ENCODE measurements at regions of chr20 and their contacts with region 1.

Region 1: DNA sequence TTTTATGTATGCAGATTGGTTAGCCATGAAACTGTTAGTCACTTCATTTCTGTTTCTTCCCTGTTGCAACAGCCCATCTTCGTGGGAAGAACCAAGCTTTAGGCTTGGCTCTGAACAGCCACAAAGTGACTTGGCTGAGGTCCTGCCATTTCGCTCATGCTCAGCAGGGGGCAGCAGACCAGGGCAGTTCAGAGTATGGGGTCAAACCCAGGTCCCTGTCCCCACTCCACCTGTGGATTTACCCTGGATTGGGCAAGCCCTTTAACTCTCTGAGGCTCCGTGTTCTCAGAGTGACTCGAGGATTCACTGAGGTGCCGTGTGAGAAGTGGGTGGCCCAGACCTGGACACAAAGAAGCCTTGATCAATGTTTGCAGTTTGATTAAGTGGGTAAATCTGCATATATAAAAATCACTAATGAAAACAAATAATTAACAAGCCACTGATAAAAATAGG is 19.8 kb upstream of the MAP1LC3A start:
- DNase-seq: peak; percentile 40 to 47
- H3K4me3 ChIP-seq: no peak overlapping the region
- H3K27ac ChIP-seq: no peak overlapping the region
- H3K4me1 ChIP-seq: no peaks in the 10 kb centered on the region
- H3K27me3 ChIP-seq: no peaks in the 10 kb centered on the region
- CTCF ChIP-seq: peak; percentile 26 to 78 (median 60)
- POLR2A ChIP-seq: no peak

Region 2: GRCh38 chr20:34143951-34144350 is 394.7 kb before region 1 on chr20:
- intact Hi-C with region 1: no loop called
- DNase-seq: no peak
- H3K4me3 ChIP-seq: no peak overlapping the region
- H3K27ac ChIP-seq: no peak overlapping the region
- H3K4me1 ChIP-seq: no peaks in the 10 kb centered on the region
- H3K27me3 ChIP-seq: no peaks in the 10 kb centered on the region
- CTCF ChIP-seq: no peak
- POLR2A ChIP-seq: no peak

Region 3: DNA sequence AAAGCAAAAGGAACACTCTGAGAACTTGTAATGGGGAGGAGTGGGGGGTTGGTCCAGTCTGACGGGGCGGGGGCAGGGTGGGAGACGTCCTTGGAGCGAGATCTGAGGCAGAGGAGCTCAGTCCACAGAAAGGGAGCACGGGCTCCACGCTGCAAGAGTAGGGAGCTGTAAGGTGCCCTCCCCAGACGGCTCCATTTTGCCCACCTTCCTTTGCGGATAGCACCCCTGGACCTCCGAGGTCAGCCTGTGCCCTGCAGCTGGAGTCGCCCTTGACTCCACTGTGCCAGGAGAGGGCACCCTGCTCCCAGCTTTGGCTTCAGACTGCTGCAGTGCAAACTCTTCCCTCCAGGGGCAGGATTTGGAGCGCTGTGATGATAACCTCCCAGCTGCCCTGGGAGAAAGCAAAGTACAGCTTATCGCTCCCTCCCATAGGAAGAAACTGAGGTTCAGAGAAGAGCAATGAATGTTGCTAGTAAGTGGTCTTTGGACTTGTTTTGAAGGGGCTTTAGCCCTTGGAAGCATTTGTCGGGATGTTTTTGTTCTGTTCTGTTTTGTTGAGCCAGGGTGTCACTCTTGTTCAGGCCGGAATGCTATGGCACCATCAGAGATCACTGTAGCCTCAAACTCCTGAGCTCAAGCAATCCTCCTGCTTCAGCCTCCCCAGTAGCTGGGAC is 226.0 kb before region 1 on chr20:
- intact Hi-C with region 1: loop called (anchors 10 kb)
- DNase-seq: peak; percentile 85 to 89
- H3K4me3 ChIP-seq: no peak overlapping the region
- H3K27ac ChIP-seq: no peak overlapping the region
- H3K4me1 ChIP-seq: peaks cover 0 to 9% of the 10 kb centered on the region in 2 donors
- H3K27me3 ChIP-seq: no peaks in the 10 kb centered on the region
- CTCF ChIP-seq: peak; percentile 97 to 100 (median 100)
- POLR2A ChIP-seq: no peak

Region 4: GRCh38 chr20:34977375-34978091 is 438.8 kb after region 1 on chr20:
- intact Hi-C with region 1: no loop called
- DNase-seq: no peak
- H3K4me3 ChIP-seq: no peak overlapping the region
- H3K27ac ChIP-seq: no peak overlapping the region
- H3K4me1 ChIP-seq: no peaks in the 10 kb centered on the region
- H3K27me3 ChIP-seq: no peaks in the 10 kb centered on the region
- CTCF ChIP-seq: no peak
- POLR2A ChIP-seq: no peak